ENCODE measurements at regions of chr10 and their contacts with region 1.

Region 1: GRCh38 chr10:126177417-126178030 is 210.8 kb downstream of the ADAM12 start:
- DNase-seq: no peak
- H3K27ac ChIP-seq: no peak overlapping the region
- CTCF ChIP-seq: no peak

Region 2: GRCh38 chr10:126129026-126129425 is 48.5 kb before region 1 on chr10:
- CTCF ChIA-PET with region 1: interaction called, 12 read pairs
- POLR2A ChIA-PET with region 1: no interaction called
- DNase-seq: no peak
- H3K27ac ChIP-seq: no peak overlapping the region
- CTCF ChIP-seq: no peak

Measured in RWPE1 (cell line).